A549 (cell line): ENCODE measurements at regions of chr11 and their contacts with region 1.

Region 1: GRCh38 chr11:66835768-66836405 is 7.4 kb upstream of the RCE1 start:
- DNase-seq: no peak
- ATAC-seq: no peak
- H3K4me3 ChIP-seq: no peak overlapping the region
- H3K27ac ChIP-seq: peak overlapping the region; percentile 54 to 62; a peak in 5 of 6 replicates
- H3K4me1 ChIP-seq: peaks cover 20% of the 10 kb centered on the region
- CTCF ChIP-seq: no peak
- EP300 ChIP-seq: no peak
- POLR2A ChIP-seq: no peak
- RAD21 ChIP-seq: no peak

Region 2: DNA sequence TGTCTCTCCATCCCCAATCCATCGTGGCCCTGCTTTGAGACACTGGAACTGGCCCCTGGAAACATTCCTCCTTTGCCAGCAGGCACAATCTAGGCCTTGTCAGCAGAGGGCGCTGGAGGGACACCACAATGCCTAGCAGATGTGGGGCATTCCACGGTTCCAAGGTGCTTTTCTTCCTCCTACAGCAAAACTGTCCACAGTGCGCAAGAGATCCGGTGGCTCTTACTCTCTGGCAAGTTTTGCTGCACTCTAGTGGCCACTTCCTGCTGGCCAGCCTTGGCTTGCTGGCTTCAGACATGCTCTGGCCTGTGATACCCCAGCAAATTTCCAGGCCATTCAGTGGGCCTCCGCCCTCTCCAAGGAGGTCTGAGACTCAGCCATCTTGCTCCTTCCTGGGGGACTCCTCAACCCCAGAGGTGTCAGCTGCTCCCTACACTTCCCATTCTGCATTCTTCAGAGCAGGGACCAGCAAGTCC is 141.1 kb before region 1 on chr11:
- CTCF ChIA-PET with region 1: interaction called, 194 read pairs
- POLR2A ChIA-PET with region 1: interaction called, 3 read pairs
- DNase-seq: peak; percentile 93 to 98
- ATAC-seq: peak; percentile 96 to 99
- H3K4me3 ChIP-seq: no peak overlapping the region
- H3K27ac ChIP-seq: peak overlapping the region; percentile 36 to 69; a peak in 3 of 6 replicates
- H3K4me1 ChIP-seq: peaks cover 5% of the 10 kb centered on the region; the same call in 1 of the 3 replicates
- CTCF ChIP-seq: peak; percentile 99
- EP300 ChIP-seq: no peak
- POLR2A ChIP-seq: no peak
- RAD21 ChIP-seq: peak; percentile 96 to 97

Region 3: GRCh38 chr11:66787912-66788758 is 47.8 kb before region 1 on chr11:
- CTCF ChIA-PET with region 1: no interaction called
- POLR2A ChIA-PET with region 1: no interaction called
- DNase-seq: no peak
- ATAC-seq: no peak
- H3K4me3 ChIP-seq: no peak overlapping the region
- H3K27ac ChIP-seq: no peak overlapping the region
- H3K4me1 ChIP-seq: peaks cover 23% of the 10 kb centered on the region
- CTCF ChIP-seq: no peak
- EP300 ChIP-seq: no peak
- POLR2A ChIP-seq: no peak
- RAD21 ChIP-seq: no peak

Region 4: GRCh38 chr11:66820381-66820780 is 15.5 kb before region 1 on chr11:
- CTCF ChIA-PET with region 1: interaction called, 16 read pairs
- POLR2A ChIA-PET with region 1: no interaction called
- DNase-seq: no peak
- ATAC-seq: no peak
- H3K4me3 ChIP-seq: no peak overlapping the region
- H3K27ac ChIP-seq: no peak overlapping the region
- H3K4me1 ChIP-seq: no peaks in the 10 kb centered on the region
- CTCF ChIP-seq: no peak
- EP300 ChIP-seq: no peak
- POLR2A ChIP-seq: no peak
- RAD21 ChIP-seq: no peak

Region 5: DNA sequence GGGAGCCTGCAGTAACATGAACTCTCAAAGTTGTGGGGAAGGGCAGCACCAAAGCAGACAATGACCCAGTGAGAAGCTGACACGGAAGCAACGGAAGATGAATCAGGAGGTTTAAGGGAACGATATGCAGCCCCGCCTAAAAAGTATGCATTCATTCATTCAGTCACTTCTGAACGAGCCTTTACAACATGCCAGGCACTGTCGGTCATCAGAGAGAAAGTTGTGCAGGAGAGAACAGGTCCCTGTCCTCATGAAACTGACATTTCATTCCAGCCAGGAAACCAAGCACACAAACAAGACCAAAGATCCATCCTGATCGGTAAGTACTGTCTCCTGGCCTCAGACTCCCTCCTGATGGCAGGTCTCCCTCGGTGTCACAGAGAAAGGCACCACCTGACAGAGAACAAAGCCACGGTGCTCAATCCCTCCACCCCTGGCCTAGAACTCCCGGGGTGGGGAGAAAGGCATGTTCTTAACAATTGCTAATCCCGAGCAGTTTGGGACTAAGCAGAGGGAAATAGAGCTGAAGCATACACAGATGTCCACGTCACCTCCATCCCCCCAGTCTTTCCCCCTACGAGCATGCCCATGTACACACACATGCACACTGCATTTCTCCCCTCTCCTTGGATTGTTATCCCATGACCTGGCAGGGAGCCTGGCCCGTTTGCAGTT is 70.3 kb after region 1 on chr11:
- CTCF ChIA-PET with region 1: no interaction called
- POLR2A ChIA-PET with region 1: no interaction called
- DNase-seq: peak in 1 of 2 experiments; percentile 61
- ATAC-seq: peak in 1 of 2 experiments; percentile 19; a peak in 3 of 6 replicates
- H3K4me3 ChIP-seq: no peak overlapping the region
- H3K27ac ChIP-seq: peak overlapping the region; percentile 76 to 83
- H3K4me1 ChIP-seq: peaks cover 55% of the 10 kb centered on the region
- CTCF ChIP-seq: no peak
- EP300 ChIP-seq: no peak
- POLR2A ChIP-seq: no peak
- RAD21 ChIP-seq: no peak

Region 6: GRCh38 chr11:67002921-67003411 is 167.1 kb after region 1 on chr11:
- CTCF ChIA-PET with region 1: no interaction called
- POLR2A ChIA-PET with region 1: no interaction called
- DNase-seq: no peak
- ATAC-seq: no peak
- H3K4me3 ChIP-seq: no peak overlapping the region
- H3K27ac ChIP-seq: peak overlapping the region in 1 of 2 experiments; percentile 24; a peak in 2 of 6 replicates
- H3K4me1 ChIP-seq: no peaks in the 10 kb centered on the region
- CTCF ChIP-seq: no peak
- EP300 ChIP-seq: no peak
- POLR2A ChIP-seq: no peak
- RAD21 ChIP-seq: no peak